Tibial artery (tissue), 4 donors: ENCODE measurements at regions of chr2 and their contacts with region 1.

Region 1: GRCh38 chr2:32168513-32168912 is 2.8 kb downstream of the SLC30A6 start:
- DNase-seq: no peak
- H3K4me3 ChIP-seq: no peak overlapping the region
- H3K27ac ChIP-seq: no peak overlapping the region
- H3K4me1 ChIP-seq: peaks cover 0 to 19% (median 9%) of the 10 kb centered on the region in 4 donors
- H3K27me3 ChIP-seq: no peaks in the 10 kb centered on the region
- CTCF ChIP-seq: no peak

Region 2: DNA sequence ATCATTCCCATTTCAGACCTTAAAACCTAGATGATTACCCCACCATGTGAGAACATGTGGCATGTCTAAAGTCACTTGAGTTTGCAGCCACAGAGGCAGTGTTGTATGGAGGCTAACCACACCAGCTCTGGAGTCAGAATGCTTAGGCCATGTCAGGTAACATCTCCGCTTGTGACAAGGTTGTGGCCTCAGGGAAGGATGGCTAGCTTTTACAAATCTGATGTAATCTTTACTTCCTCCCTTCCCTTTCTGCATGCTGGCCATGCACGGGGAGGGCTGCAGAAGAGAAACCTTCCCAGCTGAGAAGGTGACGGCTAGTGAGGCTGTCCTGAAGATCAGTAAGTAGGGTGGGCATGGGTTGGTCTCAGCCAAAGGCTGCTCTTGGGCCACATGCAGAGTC is 994.3 kb before region 1 on chr2:
- intact Hi-C with region 1: no loop called
- DNase-seq: no peak
- H3K4me3 ChIP-seq: no peak overlapping the region
- H3K27ac ChIP-seq: no peak overlapping the region
- H3K4me1 ChIP-seq: no peaks in the 10 kb centered on the region
- H3K27me3 ChIP-seq: no peaks in the 10 kb centered on the region
- CTCF ChIP-seq: no peak

Region 3: DNA sequence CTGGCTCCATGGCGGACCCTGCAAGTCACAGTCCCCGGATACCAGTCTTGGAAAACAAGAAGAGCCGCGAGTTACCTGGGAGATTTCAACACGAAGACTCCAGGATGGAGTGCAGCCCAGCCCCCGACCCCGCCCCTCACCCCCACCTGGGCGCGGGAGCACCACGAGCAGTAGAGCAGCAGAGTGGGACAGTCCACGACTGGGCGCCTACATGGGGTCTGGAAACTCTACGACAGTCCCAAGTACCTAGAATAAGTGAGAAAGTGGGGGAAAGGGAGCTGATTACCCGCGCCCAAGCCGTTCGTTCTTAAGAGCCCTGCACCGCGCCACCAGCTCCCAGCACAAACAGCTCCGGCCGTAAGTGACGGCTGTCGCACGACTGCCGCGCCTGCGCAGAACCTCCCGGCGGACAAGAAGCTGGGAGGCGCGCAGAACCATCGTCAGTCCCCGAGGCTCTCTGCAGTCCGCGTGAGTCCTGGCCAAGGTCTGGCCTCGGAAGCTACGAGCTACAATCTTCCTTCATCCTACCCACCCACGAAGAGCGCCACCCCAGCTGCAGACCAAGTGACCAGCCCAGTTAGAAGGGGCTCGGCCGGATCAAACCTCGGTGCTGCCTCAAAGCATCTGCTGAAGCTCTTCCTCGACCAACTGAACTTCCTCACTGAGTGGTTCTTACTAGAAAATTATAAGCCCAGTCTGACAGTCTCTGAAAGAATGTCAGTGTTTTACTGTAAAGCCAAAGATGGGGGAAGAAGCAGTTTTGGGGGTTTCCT is 128.9 kb before region 1 on chr2 and contains the start of gene DPY30:
- intact Hi-C with region 1: loop called (anchors 10 kb)
- DNase-seq: peak; percentile 92 to 94
- H3K4me3 ChIP-seq: peak within 1 kb of the TSS; percentile 92 to 94
- H3K27ac ChIP-seq: peak within 1 kb of the TSS; percentile 84 to 89
- H3K4me1 ChIP-seq: peaks cover 0 to 15% (median 11%) of the 10 kb centered on the region in 4 donors
- H3K27me3 ChIP-seq: no peaks in the 10 kb centered on the region
- CTCF ChIP-seq: no peak

Region 4: DNA sequence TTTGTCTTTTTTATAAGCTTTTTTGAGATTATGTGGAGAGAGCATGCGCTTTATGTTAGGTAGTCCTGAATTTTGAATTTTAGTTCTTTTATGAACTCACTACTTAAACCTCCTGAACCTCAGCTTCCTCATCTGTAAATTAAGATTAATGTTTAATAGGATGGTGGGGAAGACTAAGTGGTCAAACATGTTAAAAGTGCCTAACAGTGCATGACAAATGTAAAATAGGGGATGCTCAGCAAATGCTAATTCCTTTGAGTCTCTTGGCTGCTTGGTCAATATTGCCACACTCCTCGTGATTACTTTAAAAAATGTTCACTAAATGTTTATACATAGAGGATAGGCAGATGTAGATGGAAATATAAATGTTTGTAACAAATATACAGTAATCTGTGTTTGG is 195.1 kb after region 1 on chr2:
- intact Hi-C with region 1: no loop called
- DNase-seq: no peak
- H3K4me3 ChIP-seq: no peak overlapping the region
- H3K27ac ChIP-seq: no peak overlapping the region
- H3K4me1 ChIP-seq: peaks cover 0 to 87% (median 44%) of the 10 kb centered on the region in 4 donors
- H3K27me3 ChIP-seq: no peaks in the 10 kb centered on the region
- CTCF ChIP-seq: no peak